Activated T-helper 1 cell treated with anti-CD3 and anti-CD28 coated beads, Interleukin-12 subunit alpha, Interleukin-12 subunit beta, Interleukin-2, Interleukin-4 antibody, amounts not matched to agents 30 ng/mL and 10 ng/mL and 1 ng/mL, durations not matched to agents 14 hours and 24 hours and 36 hours (primary cell): ENCODE measurements at regions of chr20 and their contacts with region 1.

Region 1: DNA sequence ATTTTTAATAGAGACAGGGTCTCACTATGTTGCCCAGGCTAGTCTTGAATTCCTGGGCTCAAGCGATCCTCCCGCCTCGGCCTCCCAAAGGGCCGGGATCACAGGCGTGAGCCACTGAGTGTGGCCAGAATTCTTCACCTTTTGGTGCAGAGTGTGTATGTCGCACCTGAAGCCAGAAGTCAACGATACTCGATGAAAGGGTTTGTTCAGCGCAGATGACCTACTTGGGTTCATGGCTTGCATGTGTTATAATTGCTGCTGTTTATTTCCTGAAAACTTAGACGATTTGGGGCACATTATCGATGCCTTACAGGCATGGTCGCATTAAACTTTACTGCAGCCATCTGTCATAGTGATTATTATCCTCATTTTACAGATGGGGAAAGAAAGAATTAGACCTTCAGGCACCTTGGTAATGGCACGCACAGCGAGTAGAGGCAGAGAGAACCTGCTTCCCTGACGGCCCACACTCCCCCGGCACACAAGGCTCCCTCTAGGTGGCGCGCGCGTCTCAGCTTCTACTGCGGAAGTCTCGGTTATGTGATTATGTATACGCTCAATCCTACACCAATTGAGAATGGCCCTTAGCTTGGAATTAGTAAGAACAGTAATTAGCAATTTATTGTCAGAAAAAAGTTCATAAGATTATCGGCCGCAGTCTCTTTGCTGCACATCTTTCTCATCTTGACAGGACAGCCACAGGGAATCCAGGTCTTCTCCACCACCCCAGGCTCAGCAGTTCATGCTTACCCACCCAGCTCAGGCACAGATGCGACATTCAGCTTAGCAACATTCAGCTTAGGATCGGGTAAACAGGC is 212.8 kb upstream of the PROKR2 start:
- DNase-seq: peak; percentile 74
- H3K4me3 Mint-ChIP-seq: peak overlapping the region; percentile 35
- H3K27ac Mint-ChIP-seq: peak overlapping the region; percentile 47
- H3K4me1 Mint-ChIP-seq: peaks cover 26% of the 10 kb centered on the region
- H3K27me3 Mint-ChIP-seq: peaks cover 8% of the 10 kb centered on the region

Region 2: GRCh38 chr20:5548902-5549599 is 19.5 kb after region 1 on chr20:
- intact Hi-C with region 1: no loop called
- DNase-seq: no peak
- H3K4me3 Mint-ChIP-seq: no peak overlapping the region
- H3K27ac Mint-ChIP-seq: peak overlapping the region; percentile 1
- H3K4me1 Mint-ChIP-seq: peaks cover 37% of the 10 kb centered on the region
- H3K27me3 Mint-ChIP-seq: no peaks in the 10 kb centered on the region

Region 3: GRCh38 chr20:5569021-5569420 is 39.5 kb after region 1 on chr20:
- intact Hi-C with region 1: loop called (anchors 1 kb)
- DNase-seq: no peak
- H3K4me3 Mint-ChIP-seq: no peak overlapping the region
- H3K27ac Mint-ChIP-seq: peak overlapping the region; percentile 56
- H3K4me1 Mint-ChIP-seq: peaks cover 23% of the 10 kb centered on the region
- H3K27me3 Mint-ChIP-seq: no peaks in the 10 kb centered on the region

Region 4: DNA sequence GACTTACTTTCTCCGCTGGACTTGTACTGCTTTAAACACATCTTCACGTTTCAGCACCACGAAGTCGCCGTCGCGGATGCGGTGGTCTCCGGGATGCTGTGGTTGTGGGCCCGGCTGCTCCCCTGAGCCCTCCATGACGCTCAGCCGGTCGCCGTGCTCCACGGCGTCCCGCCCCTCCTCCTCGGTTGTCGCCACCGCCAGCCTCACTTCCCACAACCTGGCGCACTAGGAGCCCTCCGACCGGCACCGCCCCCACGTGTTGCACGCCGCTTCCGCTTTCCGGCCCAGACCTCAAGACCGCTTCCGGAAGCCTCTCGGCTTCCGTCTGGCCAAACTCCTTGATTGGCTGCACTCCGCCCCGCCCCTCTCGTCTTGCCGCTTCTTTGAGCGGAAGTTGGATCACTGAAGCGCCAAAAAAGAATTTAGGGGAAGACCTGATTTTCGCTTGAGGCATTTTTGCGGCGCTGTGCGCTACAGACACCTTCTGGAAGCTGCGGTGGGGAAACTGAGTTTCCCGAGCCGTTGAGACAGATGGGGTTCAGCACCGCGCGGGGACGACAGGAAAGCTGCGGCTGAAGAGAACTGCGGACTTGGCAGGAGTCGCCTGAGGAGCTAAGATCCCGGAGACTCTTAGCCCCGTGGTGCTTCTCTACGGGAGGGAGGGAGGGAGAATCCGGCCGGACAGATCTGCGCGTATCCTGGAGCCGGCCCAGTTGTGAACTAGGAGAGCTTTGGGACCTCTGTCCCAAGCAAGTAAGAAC is 420.9 kb after region 1 on chr20 and contains the starts of genes MCM8 and TRMT6:
- intact Hi-C with region 1: loop called (anchors 1 kb)
- DNase-seq: peak; percentile 95
- H3K4me3 Mint-ChIP-seq: peak within 1 kb of the TSS; percentile 90
- H3K27ac Mint-ChIP-seq: peak within 1 kb of the TSS; percentile 91
- H3K4me1 Mint-ChIP-seq: peaks cover 56% of the 10 kb centered on the region
- H3K27me3 Mint-ChIP-seq: peaks cover 2% of the 10 kb centered on the region
- total RNA-seq, gene MCM8: 36.5 and 38.8 TPM in 2 replicates
- total RNA-seq, gene TRMT6: 36.1 and 38.9 TPM in 2 replicates

Region 5: GRCh38 chr20:6074145-6074561 is 544.6 kb after region 1 on chr20:
- intact Hi-C with region 1: loop called (anchors 1 kb)
- DNase-seq: no peak
- H3K4me3 Mint-ChIP-seq: no peak overlapping the region
- H3K27ac Mint-ChIP-seq: no peak overlapping the region
- H3K4me1 Mint-ChIP-seq: no peaks in the 10 kb centered on the region
- H3K27me3 Mint-ChIP-seq: peaks cover 7% of the 10 kb centered on the region